ENCODE measurements at regions of chr6 and their contacts with region 1.

Region 1: DNA sequence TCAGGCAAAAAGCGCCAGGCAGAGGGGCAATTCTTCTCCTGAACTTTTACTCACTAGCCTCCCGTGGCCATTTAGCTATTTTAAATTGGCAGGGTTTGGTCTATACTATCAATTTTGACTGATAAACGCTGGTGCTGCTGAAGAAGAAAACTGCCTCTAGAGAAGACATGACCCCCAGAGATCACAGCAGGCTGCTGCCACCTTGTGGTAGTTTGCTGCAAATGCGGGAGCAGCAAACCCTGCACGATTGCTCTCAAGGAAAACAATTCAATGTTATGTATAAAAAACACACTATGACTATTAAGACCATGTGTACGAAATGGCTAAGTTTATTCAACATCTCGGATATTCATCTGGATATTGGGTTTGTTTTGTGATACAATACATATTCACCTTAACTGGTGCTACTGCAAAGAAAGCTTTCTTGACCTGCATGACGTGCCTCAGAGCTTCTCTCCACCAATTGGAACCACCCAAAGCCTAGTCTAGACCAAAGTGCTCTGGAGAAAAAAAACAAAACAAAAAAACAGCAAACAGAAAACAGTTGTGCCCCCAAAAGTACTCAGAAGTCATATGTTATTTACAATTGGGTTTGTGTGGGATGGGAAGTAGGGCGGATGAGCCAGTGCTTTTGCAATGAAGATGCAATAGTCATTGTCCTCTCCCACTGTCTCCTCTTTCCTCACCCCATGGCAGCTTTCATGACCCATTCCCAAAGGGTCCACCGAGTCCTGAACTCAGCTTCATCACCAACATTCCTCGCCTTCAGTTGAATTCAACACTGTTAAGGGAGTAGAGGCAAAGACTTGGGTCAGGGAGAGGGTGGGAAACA is 19.6 kb upstream of the IL17F start:
- DNase-seq: peak; percentile 58
- H3K4me3 ChIP-seq: no peak overlapping the region
- H3K27ac ChIP-seq: no peak overlapping the region
- H3K4me1 ChIP-seq: no peaks in the 10 kb centered on the region
- H3K27me3 ChIP-seq: no peaks in the 10 kb centered on the region
- CTCF ChIP-seq: peak; percentile 73 to 95 (median 91)
- EP300 ChIP-seq: no peak
- POLR2A ChIP-seq: no peak

Region 2: DNA sequence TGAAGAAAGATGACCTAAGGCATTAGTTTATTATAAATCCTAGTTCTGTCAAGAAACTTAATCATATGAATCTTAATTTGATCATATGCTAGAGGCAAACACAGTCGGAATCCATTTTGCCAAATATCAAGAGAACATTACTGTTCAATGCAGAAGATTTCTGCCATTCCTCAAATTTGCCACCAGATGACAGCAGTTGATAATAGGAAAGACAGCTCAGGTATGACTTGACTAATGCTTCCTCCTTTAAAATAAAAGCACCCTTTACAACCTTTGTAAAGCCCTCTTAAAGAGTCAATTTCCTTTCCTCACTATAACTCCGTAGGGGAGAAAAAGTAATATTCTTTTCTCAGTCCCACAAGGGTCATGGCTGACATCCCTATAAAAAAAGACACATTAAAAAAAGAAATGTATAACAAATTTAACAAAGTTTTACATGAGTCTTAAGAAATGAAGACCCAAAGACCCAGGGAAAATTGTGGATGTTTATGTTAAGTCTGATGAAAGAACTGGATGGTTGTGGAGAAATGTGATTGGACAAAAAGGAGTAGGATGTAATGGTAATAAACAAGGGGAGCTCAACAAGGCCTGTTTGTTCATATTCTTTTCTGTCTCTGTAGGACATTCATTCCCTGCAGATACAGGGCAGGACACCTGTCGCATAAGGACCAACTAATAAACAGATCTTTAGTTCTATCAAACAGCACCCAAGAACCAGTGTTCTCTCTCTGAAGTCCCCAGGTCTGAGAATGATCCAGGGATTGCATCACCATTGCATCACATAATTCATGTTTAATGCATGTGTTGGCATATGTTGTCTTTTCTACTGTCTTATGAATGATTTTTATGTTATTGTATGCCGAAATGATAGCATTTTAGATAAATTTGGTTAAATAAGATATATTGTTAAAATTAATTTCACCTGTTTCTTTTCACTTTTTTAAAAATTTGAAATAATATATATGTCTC is 100.7 kb before region 1 on chr6:
- in situ Hi-C with region 1: loop called in 1 of 4 experiments (anchors 25 kb)
- intact Hi-C with region 1: no loop called
- DNase-seq: no peak
- H3K4me3 ChIP-seq: no peak overlapping the region
- H3K27ac ChIP-seq: no peak overlapping the region
- H3K4me1 ChIP-seq: no peaks in the 10 kb centered on the region
- H3K27me3 ChIP-seq: no peaks in the 10 kb centered on the region
- CTCF ChIP-seq: peak in 4 of 5 experiments; percentile 35 to 46 (median 44)
- EP300 ChIP-seq: no peak
- POLR2A ChIP-seq: no peak

Measured in transverse colon (tissue), 4 donors.